ENCODE measurements at regions of chr7 and their contacts with region 1.

Region 1: DNA sequence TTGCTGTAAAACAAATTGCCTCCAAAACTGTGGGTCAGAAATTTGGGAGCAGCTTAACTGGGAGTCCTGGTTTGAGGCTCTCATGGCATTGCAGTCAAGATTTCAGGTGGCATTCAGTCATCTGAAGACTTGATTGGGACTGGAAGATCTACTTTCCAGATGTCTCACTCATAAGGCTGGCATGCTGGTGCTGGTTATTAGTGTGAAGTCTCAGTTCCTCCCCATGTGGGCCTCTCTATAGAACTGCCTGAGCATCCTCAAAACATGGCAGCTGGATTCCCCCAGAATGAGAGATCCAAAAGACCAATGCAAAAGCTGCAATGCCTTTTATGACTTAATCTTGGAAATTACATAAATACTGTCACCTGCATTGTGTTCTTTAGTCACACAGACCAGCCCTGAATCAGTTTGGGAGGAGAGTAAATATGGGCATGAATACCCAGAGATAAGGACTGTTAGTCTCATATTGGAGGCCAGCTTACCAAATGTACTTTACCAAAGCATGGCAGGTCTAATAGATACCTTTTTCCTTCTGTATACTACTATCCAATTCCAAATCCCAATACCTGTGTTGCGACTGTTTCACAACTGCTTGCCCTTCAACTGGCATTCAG is 6.5 kb upstream of the HERPUD2 start:
- H3K4me3 ChIP-seq: no peak overlapping the region
- H3K27ac ChIP-seq: no peak overlapping the region
- H3K4me1 ChIP-seq: no peaks in the 10 kb centered on the region
- CTCF ChIP-seq: no peak

Region 2: DNA sequence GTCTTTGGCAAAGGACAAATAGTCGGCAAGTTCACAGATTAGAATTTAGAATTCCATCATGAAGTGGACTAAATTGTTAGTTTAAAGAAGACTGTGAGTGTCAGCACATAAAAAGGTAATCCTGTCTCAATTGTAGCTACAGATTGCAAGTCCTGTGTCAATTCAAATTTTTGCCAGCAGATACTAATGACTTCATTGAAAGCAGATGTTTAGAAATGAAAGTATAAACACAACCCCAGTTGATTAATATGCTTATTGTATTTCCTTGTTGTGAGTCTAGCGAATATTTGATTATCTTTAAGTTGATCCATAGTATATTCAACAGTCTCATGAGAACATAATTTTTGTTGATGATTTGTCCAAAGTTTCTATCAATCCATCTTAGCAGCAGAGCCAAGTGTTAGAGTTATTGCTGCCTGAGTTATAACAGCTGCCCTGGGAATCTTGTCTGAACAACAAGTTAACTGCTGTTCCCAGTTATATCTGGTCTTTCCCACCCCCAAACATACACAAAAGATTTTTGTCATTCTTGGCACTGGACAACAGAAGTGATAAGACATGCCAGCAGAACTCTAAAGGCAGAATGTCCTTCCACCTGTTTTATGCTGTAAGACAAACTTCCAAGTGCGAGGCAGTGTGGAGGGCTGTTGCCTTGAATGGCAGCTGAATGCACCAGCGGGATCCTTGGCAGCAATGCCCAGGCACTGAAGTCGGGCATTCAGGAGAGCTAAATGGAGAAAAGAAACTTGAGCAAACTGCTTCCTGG is 14.8 kb after region 1 on chr7:
- CTCF ChIA-PET with region 1: interaction called, 17 read pairs
- POLR2A ChIA-PET with region 1: no interaction called
- H3K4me3 ChIP-seq: no peak overlapping the region
- H3K27ac ChIP-seq: no peak overlapping the region
- H3K4me1 ChIP-seq: peaks cover 12% of the 10 kb centered on the region
- CTCF ChIP-seq: no peak